ENCODE measurements at regions of chr12 and their contacts with region 1.

Region 1: GRCh38 chr12:1690578-1691122 is at the start of gene ADIPOR2:
- DNase-seq: peak; percentile 96
- ATAC-seq: peak; percentile 99
- H3K4me3 Mint-ChIP-seq: peak within 1 kb of the TSS; percentile 96
- H3K27ac Mint-ChIP-seq: peak within 1 kb of the TSS; percentile 95
- H3K4me1 Mint-ChIP-seq: peaks cover 29% of the 10 kb centered on the region
- H3K27me3 Mint-ChIP-seq: peaks cover 2% of the 10 kb centered on the region
- total RNA-seq, gene ADIPOR2: 50.2 to 51.3 TPM

Region 2: GRCh38 chr12:1668833-1669543 is 21.7 kb before region 1 on chr12:
- POLR2A ChIA-PET with region 1: interaction called, 13 read pairs
- DNase-seq: no peak
- ATAC-seq: no peak
- H3K4me3 Mint-ChIP-seq: peak overlapping the region; percentile 29
- H3K27ac Mint-ChIP-seq: peak overlapping the region; percentile 10
- H3K4me1 Mint-ChIP-seq: peaks cover 35% of the 10 kb centered on the region
- H3K27me3 Mint-ChIP-seq: no peaks in the 10 kb centered on the region

Region 3: DNA sequence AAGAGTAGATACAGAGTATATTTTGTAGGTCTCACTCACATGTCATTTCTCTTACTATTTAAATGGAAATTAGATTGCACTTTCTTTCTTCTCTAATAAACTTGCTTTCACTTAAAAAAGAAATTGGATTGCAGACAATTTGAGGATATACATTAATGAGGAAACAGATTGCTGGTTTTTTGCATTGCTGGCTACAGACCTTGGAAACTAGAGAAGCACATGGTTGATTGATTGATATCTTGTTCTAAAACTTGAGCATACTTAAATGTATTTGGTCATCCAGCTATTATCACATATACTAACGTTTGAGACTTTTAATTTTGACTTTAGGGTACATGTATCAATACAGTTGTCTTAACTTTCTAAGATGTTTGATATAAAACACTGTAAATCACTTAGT is 13.7 kb after region 1 on chr12:
- POLR2A ChIA-PET with region 1: interaction called, 13 read pairs
- DNase-seq: no peak
- ATAC-seq: no peak
- H3K4me3 Mint-ChIP-seq: no peak overlapping the region
- H3K27ac Mint-ChIP-seq: no peak overlapping the region
- H3K4me1 Mint-ChIP-seq: peaks cover 21% of the 10 kb centered on the region
- H3K27me3 Mint-ChIP-seq: no peaks in the 10 kb centered on the region

Measured in activated naive CD8-positive, alpha-beta T cell treated with anti-CD3 and anti-CD28 coated beads, Interleukin-2, amount 10 ng/mL, durations not matched to agents 7 days and 5 days (primary cell).